HCT116 (cell line): ENCODE measurements at regions of chr17 and their contacts with region 1.

Region 1: DNA sequence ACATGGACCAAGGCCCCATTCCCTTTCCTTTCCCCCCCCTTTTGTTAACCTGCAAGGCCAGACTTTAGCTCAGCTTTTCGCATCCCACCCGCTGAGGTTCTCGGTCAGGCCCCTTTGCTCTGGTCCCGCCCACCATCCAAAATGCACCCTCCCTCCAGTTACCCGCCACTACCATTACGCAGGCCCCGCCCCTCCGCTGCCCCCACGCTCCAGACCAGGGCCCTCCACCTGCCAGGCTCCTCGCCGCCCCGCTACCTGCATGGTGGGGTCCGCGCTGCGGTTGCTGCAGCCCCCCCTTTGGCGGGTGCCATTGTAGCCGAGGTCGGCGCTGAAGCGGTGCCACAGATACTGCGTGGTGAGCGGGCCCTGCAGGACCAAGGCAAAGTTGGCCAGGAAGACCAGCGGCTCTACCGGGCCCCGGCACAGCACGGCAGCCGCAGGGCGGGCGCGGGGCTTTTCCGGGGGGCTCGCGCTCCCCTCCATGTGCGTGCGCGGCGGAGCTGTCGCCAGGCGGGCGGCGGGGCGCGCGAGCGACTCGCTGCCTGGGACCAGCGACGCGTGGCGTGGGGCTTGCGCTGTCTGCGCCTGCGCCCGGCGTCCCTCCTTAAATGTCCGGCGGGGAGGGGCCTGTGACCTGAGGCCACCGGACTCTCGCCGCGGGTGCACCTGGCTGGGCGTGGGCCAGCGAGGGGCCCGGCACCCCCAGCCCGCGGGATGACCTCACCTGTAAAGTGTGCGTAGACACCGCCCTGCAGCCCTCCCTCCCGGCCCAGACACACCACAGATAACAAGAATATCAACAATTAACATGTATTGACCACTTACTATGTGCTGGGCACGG is at the start of gene SLC46A1:
- DNase-seq: no peak
- ATAC-seq: peak; percentile 93
- H3K4me3 ChIP-seq: peak within 1 kb of the TSS; percentile 73 to 89
- H3K27ac ChIP-seq: peak within 1 kb of the TSS; percentile 70
- H3K4me1 ChIP-seq: peaks cover 4 to 26% of the 10 kb centered on the region in 2 experiments; a peak in 3 of 4 replicates
- H3K27me3 ChIP-seq: no peaks in the 10 kb centered on the region
- CTCF ChIP-seq: no peak
- POLR2A ChIP-seq: peak; percentile 41
- RAD21 ChIP-seq: no peak
- total RNA-seq, gene SLC46A1: 17.8 TPM

Region 2: GRCh38 chr17:28416703-28417311 is 11.0 kb after region 1 on chr17:
- CTCF ChIA-PET with region 1: interaction called, 20 read pairs
- POLR2A ChIA-PET with region 1: interaction called, 4 read pairs
- RAD21 ChIA-PET with region 1: no interaction called
- intact Hi-C with region 1: no loop called
- DNase-seq: peak; percentile 60
- ATAC-seq: peak; percentile 100
- H3K4me3 ChIP-seq: no peak overlapping the region
- H3K27ac ChIP-seq: no peak overlapping the region
- H3K4me1 ChIP-seq: peaks cover 0 to 9% of the 10 kb centered on the region in 2 experiments; a peak in 2 of 4 replicates
- H3K27me3 ChIP-seq: no peaks in the 10 kb centered on the region
- CTCF ChIP-seq: peak; percentile 54 to 90 (median 84); a peak in 5 of 6 replicates
- POLR2A ChIP-seq: no peak
- RAD21 ChIP-seq: peak; percentile 64